Activated CD4-positive, alpha-beta T cell treated with anti-CD3 and anti-CD28 coated beads, Interleukin-2, amount 10 ng/mL, durations not matched to agents 24 days and 14 days (primary cell): ENCODE measurements at regions of chr6 and their contacts with region 1.

Region 1: GRCh38 chr6:142885182-142885867 is 59.7 kb downstream of the HIVEP2 start:
- DNase-seq: peak; percentile 86
- H3K4me3 Mint-ChIP-seq: peak overlapping the region; percentile 92
- H3K27ac Mint-ChIP-seq: peak overlapping the region; percentile 99
- H3K4me1 Mint-ChIP-seq: peaks cover 63% of the 10 kb centered on the region
- H3K27me3 Mint-ChIP-seq: no peaks in the 10 kb centered on the region

Region 2: DNA sequence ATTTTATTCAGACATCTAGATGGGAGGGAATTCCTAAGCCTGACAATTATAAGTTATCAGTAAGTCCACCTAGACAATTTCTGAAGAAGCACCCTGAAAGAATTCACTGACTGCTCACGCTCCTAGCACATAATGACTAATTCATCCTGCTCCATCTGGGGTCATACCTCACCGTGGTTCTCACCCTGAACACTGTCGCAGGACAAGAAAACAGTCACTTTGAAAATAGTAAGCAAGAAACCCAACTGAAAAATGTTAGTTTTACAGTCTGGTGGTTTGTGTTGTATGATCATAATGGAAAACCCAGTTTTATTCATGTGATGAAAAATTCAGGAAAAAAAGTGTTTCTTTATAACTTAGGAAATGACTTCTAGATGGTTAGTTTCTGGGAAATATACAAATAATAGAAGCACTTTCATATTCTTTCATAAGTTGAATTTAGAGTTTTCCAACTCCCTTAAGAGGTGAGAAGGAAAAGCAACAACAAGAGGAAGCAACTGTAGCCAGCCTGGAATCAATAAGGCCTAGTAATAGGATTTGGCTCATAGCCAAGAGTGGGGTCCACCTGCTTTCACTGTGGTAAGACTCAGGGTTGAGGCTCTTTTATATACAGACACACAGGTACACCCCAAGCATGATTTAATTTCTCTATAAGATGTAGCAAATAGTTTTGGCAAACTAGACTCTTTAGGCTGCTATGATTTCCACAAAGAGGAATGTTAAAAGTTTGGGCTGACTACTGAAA is 34.5 kb before region 1 on chr6:
- intact Hi-C with region 1: loop called (anchors 1 kb)
- DNase-seq: peak; percentile 74
- H3K4me3 Mint-ChIP-seq: peak overlapping the region; percentile 70
- H3K27ac Mint-ChIP-seq: peak overlapping the region; percentile 87
- H3K4me1 Mint-ChIP-seq: peaks cover 83% of the 10 kb centered on the region
- H3K27me3 Mint-ChIP-seq: no peaks in the 10 kb centered on the region

Region 3: DNA sequence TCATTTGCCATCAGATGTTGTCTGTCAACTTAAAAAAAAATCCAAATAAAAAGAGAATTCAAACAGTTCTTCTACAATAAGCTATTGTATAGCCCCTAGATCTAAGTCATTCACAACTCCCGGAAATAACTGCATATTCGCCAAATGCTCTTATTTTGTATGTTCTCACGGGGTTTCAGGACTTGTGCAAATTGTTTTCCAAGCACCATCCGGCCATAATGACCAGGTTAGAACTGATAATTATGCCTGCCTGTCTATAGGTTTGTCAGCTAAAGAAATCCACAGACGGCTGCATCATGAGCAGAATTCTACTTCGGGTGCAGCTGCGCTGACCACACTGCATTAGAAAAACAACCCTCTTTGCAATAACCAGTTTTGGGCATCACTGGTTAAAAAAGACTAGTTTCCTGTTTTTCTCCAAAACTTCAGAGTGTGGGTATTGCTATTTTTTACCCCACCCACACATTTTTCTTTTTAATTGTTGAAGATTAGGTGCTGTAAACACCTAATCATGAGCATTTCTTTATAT is 28.0 kb before region 1 on chr6:
- intact Hi-C with region 1: loop called (anchors 1 kb)
- DNase-seq: peak; percentile 78
- H3K4me3 Mint-ChIP-seq: peak overlapping the region; percentile 83
- H3K27ac Mint-ChIP-seq: peak overlapping the region; percentile 97
- H3K4me1 Mint-ChIP-seq: peaks cover 81% of the 10 kb centered on the region
- H3K27me3 Mint-ChIP-seq: no peaks in the 10 kb centered on the region

Region 4: DNA sequence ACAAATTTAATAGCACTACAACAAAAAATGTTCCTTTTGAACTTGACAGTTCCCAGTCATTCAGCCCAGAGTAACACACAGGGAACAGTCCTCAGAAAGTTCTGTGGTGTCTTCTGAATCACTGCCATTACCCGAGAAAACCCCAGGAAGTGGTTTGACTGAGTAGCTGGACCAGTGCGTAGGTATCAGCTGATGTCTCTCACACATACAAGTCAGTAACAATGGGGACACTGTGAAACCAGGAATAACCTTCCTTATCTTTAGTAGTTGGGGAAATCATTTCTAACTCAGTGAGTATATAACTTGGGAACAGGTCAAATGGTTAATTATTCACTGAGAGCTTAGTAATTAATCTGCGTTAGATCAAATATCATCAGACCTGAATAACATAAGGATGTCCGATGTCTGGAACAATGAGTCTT is 13.4 kb before region 1 on chr6:
- intact Hi-C with region 1: loop called (anchors 1 kb)
- DNase-seq: peak; percentile 87
- H3K4me3 Mint-ChIP-seq: peak overlapping the region; percentile 78
- H3K27ac Mint-ChIP-seq: peak overlapping the region; percentile 66
- H3K4me1 Mint-ChIP-seq: peaks cover 77% of the 10 kb centered on the region
- H3K27me3 Mint-ChIP-seq: no peaks in the 10 kb centered on the region

Region 5: DNA sequence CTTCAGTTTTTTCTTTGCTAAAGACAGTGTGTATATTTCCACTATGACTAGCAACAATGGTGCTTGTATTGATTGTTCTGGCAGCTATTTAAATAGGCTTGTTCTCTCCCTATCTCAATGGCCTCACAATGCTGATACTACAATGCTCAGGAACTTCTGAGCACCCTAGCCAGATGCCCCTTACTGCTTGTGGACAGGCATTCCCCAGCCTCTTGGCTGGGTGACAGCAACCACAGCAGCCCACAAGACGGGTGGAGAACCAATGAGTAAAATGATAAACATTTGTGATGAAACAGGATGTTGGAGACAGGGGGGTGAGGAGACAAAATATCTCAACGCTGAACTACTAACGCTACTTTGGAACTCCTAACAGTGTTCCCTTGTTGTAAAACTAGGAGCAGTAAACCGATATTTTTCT is 17.3 kb after region 1 on chr6:
- intact Hi-C with region 1: loop called (anchors 1 kb)
- DNase-seq: peak; percentile 93
- H3K4me3 Mint-ChIP-seq: peak overlapping the region; percentile 78
- H3K27ac Mint-ChIP-seq: peak overlapping the region; percentile 98
- H3K4me1 Mint-ChIP-seq: peaks cover 63% of the 10 kb centered on the region
- H3K27me3 Mint-ChIP-seq: no peaks in the 10 kb centered on the region

Region 6: DNA sequence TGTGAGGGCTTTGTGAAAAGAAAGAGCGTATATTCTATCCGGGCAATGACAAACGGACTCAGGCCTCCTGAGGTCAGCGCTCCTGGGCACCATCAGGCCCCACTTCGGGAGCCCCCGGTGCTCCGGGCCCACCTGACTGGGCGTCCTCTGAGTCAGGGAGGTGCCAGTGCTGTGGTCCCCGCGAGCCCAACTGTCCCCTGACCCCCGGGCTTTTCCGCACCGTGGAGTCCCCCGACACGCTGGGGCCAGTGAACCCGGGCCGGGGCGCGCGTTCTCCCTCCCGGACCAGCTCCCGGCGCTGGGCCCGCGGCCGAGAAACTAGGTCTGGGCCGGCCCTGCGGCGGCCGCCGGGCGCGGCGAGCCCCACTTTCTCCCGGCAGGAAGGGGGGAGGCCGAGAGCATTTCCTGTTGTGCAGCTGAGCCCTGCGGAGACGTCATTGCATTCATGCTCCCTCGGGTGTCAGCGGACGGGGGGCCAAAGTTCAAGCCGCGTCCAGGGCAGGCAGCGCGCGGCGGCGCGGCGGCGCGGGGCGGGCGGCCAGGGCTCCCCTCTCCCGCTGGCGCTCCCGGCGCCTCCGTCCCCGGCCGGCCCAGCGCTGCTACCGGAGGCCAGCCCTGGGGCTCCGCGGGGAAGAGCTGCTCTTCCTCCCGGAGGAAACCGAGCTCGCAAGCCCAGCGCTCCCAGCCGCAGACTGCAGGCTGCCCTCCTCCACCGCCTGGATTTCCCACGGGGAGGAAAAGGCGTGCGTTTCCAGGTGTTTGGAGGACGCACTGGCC is 41.4 kb after region 1 on chr6:
- intact Hi-C with region 1: loop called (anchors 1 kb)
- DNase-seq: peak; percentile 94
- H3K4me3 Mint-ChIP-seq: peak overlapping the region; percentile 95
- H3K27ac Mint-ChIP-seq: peak overlapping the region; percentile 92
- H3K4me1 Mint-ChIP-seq: peaks cover 43% of the 10 kb centered on the region
- H3K27me3 Mint-ChIP-seq: no peaks in the 10 kb centered on the region

Region 7: DNA sequence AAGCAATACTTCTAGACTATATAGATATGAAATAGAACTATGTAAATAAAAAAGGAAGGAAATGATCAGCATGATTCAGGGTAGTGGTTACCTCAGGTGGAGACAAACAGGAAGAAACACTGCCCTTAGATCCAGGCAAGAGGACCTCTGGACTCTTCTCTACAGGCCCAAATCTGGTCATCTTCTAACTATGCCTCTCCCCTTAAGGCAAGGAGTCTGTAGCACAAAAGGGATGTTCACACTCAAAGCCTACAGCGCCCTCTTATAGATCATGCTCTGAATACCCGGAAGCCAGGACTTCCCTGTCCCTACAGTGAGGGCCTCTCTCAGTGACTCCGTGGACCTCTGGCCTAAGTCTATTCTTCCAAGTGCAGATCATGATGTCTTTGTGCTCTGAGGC is 90.0 kb after region 1 on chr6:
- intact Hi-C with region 1: no loop called
- DNase-seq: no peak
- H3K4me3 Mint-ChIP-seq: no peak overlapping the region
- H3K27ac Mint-ChIP-seq: no peak overlapping the region
- H3K4me1 Mint-ChIP-seq: peaks cover 8% of the 10 kb centered on the region
- H3K27me3 Mint-ChIP-seq: peaks cover 4% of the 10 kb centered on the region

Region 8: GRCh38 chr6:143536865-143537691 is 651.8 kb after region 1 on chr6:
- intact Hi-C with region 1: no loop called
- DNase-seq: peak; percentile 90
- H3K4me3 Mint-ChIP-seq: peak overlapping the region; percentile 88
- H3K27ac Mint-ChIP-seq: peak overlapping the region; percentile 76
- H3K4me1 Mint-ChIP-seq: peaks cover 37% of the 10 kb centered on the region
- H3K27me3 Mint-ChIP-seq: no peaks in the 10 kb centered on the region